ENCODE measurements at regions of chr16 and their contacts with region 1.

Region 1: GRCh38 chr16:56608043-56608875 is at the start of gene MT2A:
- DNase-seq: peak; percentile 94
- H3K4me3 Mint-ChIP-seq: peak within 1 kb of the TSS; percentile 88
- H3K27ac Mint-ChIP-seq: peak within 1 kb of the TSS; percentile 88
- H3K4me1 Mint-ChIP-seq: peaks cover 62% of the 10 kb centered on the region
- H3K27me3 Mint-ChIP-seq: no peaks in the 10 kb centered on the region
- total RNA-seq, gene MT2A: 95.7 to 130 TPM

Region 2: GRCh38 chr16:56356276-56357240 is 251.7 kb before region 1 on chr16:
- CTCF ChIA-PET with region 1: no interaction called
- intact Hi-C with region 1: loop called (anchors 2 kb)
- DNase-seq: peak; percentile 68
- H3K4me3 Mint-ChIP-seq: peak overlapping the region; percentile 74
- H3K27ac Mint-ChIP-seq: peak overlapping the region; percentile 86
- H3K4me1 Mint-ChIP-seq: peaks cover 31% of the 10 kb centered on the region
- H3K27me3 Mint-ChIP-seq: no peaks in the 10 kb centered on the region

Region 3: GRCh38 chr16:56643080-56643778 is 35.0 kb after region 1 on chr16:
- CTCF ChIA-PET with region 1: interaction called, 6 read pairs
- intact Hi-C with region 1: loop called (anchors 1 kb)
- DNase-seq: peak; percentile 87
- H3K4me3 Mint-ChIP-seq: peak overlapping the region; percentile 46
- H3K27ac Mint-ChIP-seq: peak overlapping the region; percentile 9
- H3K4me1 Mint-ChIP-seq: peaks cover 21% of the 10 kb centered on the region
- H3K27me3 Mint-ChIP-seq: peaks cover 40% of the 10 kb centered on the region

Region 4: DNA sequence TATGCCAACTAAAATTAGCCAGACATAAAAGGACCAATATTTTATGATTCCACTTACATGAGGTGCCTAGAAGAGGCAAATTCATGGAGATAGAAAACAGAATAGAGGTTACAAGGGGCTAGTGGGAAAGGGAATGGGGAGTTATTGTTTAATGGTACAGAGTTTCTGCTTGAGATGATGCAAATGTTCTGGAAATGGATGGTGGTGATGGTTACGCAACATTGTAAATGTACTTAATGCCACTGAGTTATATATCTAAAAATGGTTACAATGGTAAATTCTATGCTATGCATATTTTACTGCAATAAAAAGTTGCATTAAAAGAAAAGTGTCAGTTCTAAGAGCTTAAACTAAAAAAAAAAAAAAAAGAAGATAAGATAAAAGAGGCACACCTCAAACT is 91.9 kb after region 1 on chr16:
- CTCF ChIA-PET with region 1: interaction called, 57 read pairs
- intact Hi-C with region 1: loop called (anchors 1 kb)
- DNase-seq: no peak
- H3K4me3 Mint-ChIP-seq: no peak overlapping the region
- H3K27ac Mint-ChIP-seq: no peak overlapping the region
- H3K4me1 Mint-ChIP-seq: peaks cover 4% of the 10 kb centered on the region
- H3K27me3 Mint-ChIP-seq: no peaks in the 10 kb centered on the region

Region 5: GRCh38 chr16:56944954-56945839 is 336.9 kb after region 1 on chr16:
- CTCF ChIA-PET with region 1: no interaction called
- intact Hi-C with region 1: loop called (anchors 2 kb)
- DNase-seq: peak; percentile 65
- H3K4me3 Mint-ChIP-seq: peak overlapping the region; percentile 3
- H3K27ac Mint-ChIP-seq: peak overlapping the region; percentile 96
- H3K4me1 Mint-ChIP-seq: peaks cover 56% of the 10 kb centered on the region
- H3K27me3 Mint-ChIP-seq: no peaks in the 10 kb centered on the region

Region 6: GRCh38 chr16:57045694-57046381 is 437.6 kb after region 1 on chr16:
- CTCF ChIA-PET with region 1: no interaction called
- intact Hi-C with region 1: loop called (anchors 2 kb)
- DNase-seq: peak; percentile 51
- H3K4me3 Mint-ChIP-seq: no peak overlapping the region
- H3K27ac Mint-ChIP-seq: peak overlapping the region; percentile 73
- H3K4me1 Mint-ChIP-seq: peaks cover 65% of the 10 kb centered on the region
- H3K27me3 Mint-ChIP-seq: no peaks in the 10 kb centered on the region

Measured in activated naive CD4-positive, alpha-beta T cell treated with anti-CD3 and anti-CD28 coated beads for 36 hours (primary cell).